Naive thymus-derived CD4-positive, alpha-beta T cell (primary cell): ENCODE measurements at regions of chrX and their contacts with region 1.

Region 1: DNA sequence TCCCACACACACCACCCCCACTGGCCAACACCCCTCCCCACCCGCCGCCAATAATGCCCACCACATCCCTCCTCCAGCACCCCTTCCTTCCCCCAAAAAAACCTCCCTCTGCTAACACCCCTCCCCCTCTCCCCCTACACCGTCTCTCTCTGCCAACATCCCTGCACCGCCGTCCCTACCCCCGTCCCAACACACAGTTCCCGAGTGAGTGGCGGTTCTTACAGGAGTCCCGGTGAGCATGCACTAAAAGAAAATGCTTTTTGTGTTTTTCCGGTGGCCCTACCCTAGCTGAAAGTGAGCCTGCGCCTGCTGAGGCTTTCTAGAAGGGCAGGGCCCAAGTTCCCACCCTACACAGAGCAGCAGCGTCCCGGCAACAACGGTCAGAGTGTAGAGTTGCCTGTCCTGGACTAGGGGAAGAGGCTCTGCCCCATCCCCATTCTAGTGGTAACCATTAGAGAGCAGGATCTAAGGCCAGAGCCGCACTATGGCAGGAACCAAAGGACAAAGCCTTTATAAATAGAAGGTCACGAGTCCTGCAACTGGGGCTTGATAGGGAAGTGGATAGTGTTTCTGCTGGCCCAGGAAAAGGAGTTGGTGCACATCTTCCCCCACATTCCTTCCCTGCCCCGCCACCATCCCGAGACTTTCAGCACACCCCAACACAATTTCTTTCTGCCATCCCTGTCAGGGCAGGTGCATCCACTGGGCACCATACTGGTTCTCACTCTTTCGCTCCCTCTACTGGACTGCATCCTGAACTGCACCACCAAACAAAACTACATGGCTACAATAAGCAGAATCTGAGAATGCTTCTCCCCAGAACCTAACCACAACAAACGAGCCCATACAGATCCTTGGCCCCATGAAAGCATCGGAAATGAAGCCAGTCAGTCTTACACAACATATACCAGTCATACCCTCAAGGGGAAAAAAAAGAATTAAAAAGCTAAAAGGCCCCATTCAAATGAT is 78.1 kb upstream of the PAGE3 start:
- DNase-seq: peak in 8 of 9 donors; percentile 21 to 72 (median 52)
- ATAC-seq: peak; percentile 80
- H3K4me3 ChIP-seq: no peak overlapping the region
- H3K4me3 Mint-ChIP-seq: peak overlapping the region in 9 of 10 donors; percentile 0 to 65 (median 22)
- H3K27ac ChIP-seq: no peak overlapping the region
- H3K27ac Mint-ChIP-seq: peak overlapping the region in 5 of 9 donors; percentile 19 to 35 (median 24)
- H3K4me1 ChIP-seq: peaks cover 0 to 7% of the 10 kb centered on the region in 2 donors
- H3K4me1 Mint-ChIP-seq: peaks cover 10 to 26% (median 21%) of the 10 kb centered on the region in 7 donors
- H3K27me3 ChIP-seq: no peaks in the 10 kb centered on the region
- H3K27me3 Mint-ChIP-seq: peaks cover 0 to 9% (median 0%) of the 10 kb centered on the region in 5 donors

Region 2: DNA sequence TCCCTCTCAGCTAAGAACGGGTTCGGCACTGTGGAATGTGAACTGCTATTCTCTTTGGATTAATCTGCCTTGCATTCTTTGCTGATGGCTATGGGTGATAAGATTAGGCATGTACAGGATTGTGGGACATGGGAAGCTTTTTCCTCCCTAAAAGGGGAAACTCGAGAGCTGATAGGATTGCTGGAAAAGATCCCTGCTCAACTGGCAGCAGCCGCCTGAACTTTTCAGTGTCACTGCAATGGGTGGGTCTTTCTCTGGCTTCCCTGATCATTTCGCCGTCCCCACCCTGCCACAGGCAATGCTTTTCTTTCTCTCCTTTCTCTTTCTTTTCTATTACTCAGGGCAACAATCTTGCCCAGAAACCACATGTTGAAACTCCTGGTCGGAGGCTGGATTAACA is 233.5 kb before region 1 on chrX:
- CTCF ChIA-PET with region 1: no interaction called
- POLR2A ChIA-PET with region 1: no interaction called
- intact Hi-C with region 1: no loop called
- DNase-seq: no peak
- ATAC-seq: no peak
- H3K4me3 ChIP-seq: no peak overlapping the region
- H3K4me3 Mint-ChIP-seq: no peak overlapping the region
- H3K27ac ChIP-seq: no peak overlapping the region
- H3K27ac Mint-ChIP-seq: no peak overlapping the region
- H3K4me1 ChIP-seq: no peaks in the 10 kb centered on the region
- H3K4me1 Mint-ChIP-seq: peaks cover 0 to 3% (median 0%) of the 10 kb centered on the region in 7 donors
- H3K27me3 ChIP-seq: no peaks in the 10 kb centered on the region
- H3K27me3 Mint-ChIP-seq: no peaks in the 10 kb centered on the region

Region 3: DNA sequence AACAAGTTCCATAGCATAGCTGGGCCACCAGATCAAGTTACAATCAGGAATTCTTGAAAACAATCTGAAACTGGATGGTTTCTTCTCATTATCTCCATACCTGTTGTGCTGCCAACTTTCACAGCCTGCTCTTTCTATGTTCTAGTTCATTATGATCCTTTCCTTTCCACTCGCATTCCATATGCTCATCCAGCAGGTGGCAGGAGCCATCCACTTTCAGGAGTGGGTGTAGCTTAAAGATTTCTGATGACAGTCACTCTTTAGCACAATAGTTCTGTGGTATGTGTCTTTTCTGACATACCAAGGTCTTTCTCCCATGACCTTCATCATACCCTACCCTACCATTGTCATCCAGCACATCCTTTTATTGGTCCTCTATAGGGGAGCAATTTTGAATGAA is 207.6 kb before region 1 on chrX:
- CTCF ChIA-PET with region 1: no interaction called
- POLR2A ChIA-PET with region 1: no interaction called
- intact Hi-C with region 1: loop called in 1 of 2 experiments (anchors 1 kb)
- DNase-seq: peak in 7 of 9 donors; percentile 3 to 45 (median 17)
- ATAC-seq: no peak
- H3K4me3 ChIP-seq: no peak overlapping the region
- H3K4me3 Mint-ChIP-seq: no peak overlapping the region
- H3K27ac ChIP-seq: no peak overlapping the region
- H3K27ac Mint-ChIP-seq: no peak overlapping the region
- H3K4me1 ChIP-seq: no peaks in the 10 kb centered on the region
- H3K4me1 Mint-ChIP-seq: peaks cover 0 to 5% (median 0%) of the 10 kb centered on the region in 7 donors
- H3K27me3 ChIP-seq: no peaks in the 10 kb centered on the region
- H3K27me3 Mint-ChIP-seq: no peaks in the 10 kb centered on the region

Region 4: DNA sequence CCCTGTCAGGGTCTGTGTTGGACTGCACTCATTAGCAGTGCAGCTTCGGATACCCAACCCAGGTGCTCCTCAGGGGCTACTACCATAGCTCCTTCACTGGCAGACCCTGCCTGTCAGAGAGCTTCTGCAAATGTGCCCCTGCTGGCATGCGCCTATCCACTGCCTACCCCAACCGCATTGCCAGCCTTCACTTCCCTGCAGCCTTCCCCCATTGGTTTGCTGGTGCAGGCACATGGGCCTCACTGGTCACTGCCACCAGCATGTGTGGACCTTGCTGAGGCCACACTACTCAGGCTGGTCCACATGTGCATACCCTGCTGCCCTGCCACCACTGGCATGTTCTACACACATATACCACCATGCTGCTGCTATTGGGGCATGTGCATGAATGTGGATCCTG is 36.6 kb after region 1 on chrX:
- CTCF ChIA-PET with region 1: no interaction called
- POLR2A ChIA-PET with region 1: no interaction called
- intact Hi-C with region 1: no loop called
- DNase-seq: no peak
- ATAC-seq: no peak
- H3K4me3 ChIP-seq: no peak overlapping the region
- H3K4me3 Mint-ChIP-seq: no peak overlapping the region
- H3K27ac ChIP-seq: no peak overlapping the region
- H3K27ac Mint-ChIP-seq: no peak overlapping the region
- H3K4me1 ChIP-seq: no peaks in the 10 kb centered on the region
- H3K4me1 Mint-ChIP-seq: no peaks in the 10 kb centered on the region
- H3K27me3 ChIP-seq: no peaks in the 10 kb centered on the region
- H3K27me3 Mint-ChIP-seq: no peaks in the 10 kb centered on the region